ENCODE measurements at regions of chr2 and their contacts with region 1.

Region 1: GRCh38 chr2:120012771-120013596 is at the start of gene EPB41L5:
- DNase-seq: peak; percentile 94
- H3K4me3 Mint-ChIP-seq: peak within 1 kb of the TSS; percentile 75
- H3K27ac Mint-ChIP-seq: no peak within 1 kb of the TSS
- H3K4me1 Mint-ChIP-seq: peaks cover 11% of the 10 kb centered on the region
- H3K27me3 Mint-ChIP-seq: peaks cover 13% of the 10 kb centered on the region
- total RNA-seq, gene EPB41L5: 1.5 and 2.2 TPM in 2 replicates

Region 2: DNA sequence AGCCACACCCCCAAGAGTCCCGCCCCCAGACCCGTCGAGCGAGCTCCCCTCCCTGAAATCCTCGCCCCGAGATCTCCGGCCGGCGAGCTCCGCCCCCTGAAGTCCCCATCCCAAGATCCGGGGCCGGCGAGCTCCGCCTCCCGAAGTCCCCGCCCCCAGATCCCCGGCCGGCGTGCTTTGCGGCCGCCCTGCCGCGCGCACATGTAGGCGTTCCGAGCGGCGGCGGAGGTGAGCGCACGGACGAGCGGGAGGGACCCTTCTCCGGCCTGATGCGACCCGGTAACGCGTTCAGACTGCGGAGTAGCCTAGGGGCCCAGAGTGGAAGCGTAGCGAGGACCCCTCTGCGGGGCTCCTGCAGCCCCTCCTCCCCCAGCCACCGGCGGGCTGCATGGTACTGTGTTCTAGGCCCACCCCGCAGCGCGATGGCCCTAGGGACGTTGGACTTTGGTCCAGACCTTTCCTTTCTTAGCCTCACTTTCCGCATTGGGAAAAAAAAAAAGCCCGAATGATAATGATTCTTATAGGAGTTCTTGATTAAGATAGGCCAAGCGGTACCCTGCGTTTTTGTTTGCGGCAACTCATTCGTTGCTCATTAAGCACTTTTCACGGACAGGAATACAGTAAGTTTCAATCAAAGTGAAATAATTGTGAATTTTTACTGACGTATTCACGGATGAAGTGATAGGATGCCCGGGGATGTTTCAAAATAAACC is 333.8 kb before region 1 on chr2 and contains the start of gene TMEM177:
- intact Hi-C with region 1: loop called (anchors 5 kb)
- DNase-seq: peak; percentile 98
- H3K4me3 Mint-ChIP-seq: peak within 1 kb of the TSS; percentile 87
- H3K27ac Mint-ChIP-seq: peak within 1 kb of the TSS; percentile 76
- H3K4me1 Mint-ChIP-seq: peaks cover 31% of the 10 kb centered on the region
- H3K27me3 Mint-ChIP-seq: peaks cover 12% of the 10 kb centered on the region
- total RNA-seq, gene TMEM177: 19.0 and 20.6 TPM in 2 replicates

Region 3: DNA sequence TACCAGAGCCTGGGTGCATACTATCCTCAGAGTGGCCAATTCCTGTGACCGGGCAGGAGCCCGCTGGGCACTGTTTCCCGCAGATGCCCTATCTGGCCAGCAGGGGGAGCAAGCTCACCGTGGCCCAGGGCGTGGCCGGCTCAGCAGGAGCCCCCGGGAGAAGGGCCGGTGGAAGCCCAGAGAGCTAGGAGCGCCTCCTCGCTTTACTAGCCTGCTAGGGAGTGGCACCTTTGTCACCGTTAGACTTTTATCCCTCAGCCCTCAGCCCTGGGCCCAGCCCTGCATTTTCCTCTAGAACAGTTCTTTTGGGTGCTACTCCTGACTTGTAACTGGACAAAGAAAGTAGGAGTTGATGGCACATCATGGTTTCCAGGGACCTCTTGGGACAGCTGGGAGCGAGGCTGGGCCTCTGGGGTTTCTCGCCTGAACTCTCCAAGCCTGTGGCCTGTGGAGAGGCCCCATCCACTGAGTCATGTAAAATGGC is 310.0 kb before region 1 on chr2:
- intact Hi-C with region 1: loop called (anchors 5 kb)
- DNase-seq: peak; percentile 91
- H3K4me3 Mint-ChIP-seq: no peak overlapping the region
- H3K27ac Mint-ChIP-seq: no peak overlapping the region
- H3K4me1 Mint-ChIP-seq: peaks cover 10% of the 10 kb centered on the region
- H3K27me3 Mint-ChIP-seq: no peaks in the 10 kb centered on the region

Region 4: DNA sequence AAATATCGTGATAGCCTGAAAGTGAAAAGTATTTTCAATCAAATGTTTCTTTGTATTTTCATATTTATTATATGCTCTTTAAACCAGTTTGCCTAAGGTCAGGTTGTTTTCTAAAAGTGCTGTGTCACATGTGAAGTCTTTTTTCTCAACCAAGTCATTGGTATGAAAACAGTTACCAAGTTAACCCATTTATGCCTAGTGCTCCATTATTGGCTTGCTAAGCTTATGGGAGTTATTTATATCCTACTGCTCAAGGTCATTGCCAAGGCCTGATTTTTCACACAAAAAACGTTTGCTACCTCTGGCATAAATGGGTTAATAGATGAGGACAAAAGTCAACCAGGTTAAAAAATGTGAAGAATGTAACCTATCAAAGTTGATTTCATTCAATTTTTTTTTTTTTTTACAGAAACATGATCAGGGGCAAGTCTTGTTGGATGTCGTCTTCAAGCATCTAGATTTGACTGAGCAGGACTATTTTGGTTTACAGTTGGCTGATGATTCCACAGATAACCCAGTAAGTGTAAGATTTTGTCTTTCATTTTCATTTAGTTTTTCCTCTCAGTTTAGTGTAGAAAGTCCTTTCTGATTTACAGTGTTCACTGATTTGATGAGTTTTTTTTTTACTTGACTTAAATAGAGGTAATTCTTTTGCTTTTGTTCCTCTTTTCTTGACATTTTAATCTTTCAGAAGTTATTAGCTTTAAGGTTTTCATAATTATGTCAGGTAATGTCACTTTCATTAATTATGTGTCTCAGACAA is 150.7 kb before region 1 on chr2:
- intact Hi-C with region 1: loop called (anchors 5 kb)
- DNase-seq: peak; percentile 64
- H3K4me3 Mint-ChIP-seq: peak overlapping the region; percentile 56
- H3K27ac Mint-ChIP-seq: peak overlapping the region; percentile 62
- H3K4me1 Mint-ChIP-seq: peaks cover 40% of the 10 kb centered on the region
- H3K27me3 Mint-ChIP-seq: no peaks in the 10 kb centered on the region